ENCODE measurements at regions of chr14 and their contacts with region 1.

Region 1: DNA sequence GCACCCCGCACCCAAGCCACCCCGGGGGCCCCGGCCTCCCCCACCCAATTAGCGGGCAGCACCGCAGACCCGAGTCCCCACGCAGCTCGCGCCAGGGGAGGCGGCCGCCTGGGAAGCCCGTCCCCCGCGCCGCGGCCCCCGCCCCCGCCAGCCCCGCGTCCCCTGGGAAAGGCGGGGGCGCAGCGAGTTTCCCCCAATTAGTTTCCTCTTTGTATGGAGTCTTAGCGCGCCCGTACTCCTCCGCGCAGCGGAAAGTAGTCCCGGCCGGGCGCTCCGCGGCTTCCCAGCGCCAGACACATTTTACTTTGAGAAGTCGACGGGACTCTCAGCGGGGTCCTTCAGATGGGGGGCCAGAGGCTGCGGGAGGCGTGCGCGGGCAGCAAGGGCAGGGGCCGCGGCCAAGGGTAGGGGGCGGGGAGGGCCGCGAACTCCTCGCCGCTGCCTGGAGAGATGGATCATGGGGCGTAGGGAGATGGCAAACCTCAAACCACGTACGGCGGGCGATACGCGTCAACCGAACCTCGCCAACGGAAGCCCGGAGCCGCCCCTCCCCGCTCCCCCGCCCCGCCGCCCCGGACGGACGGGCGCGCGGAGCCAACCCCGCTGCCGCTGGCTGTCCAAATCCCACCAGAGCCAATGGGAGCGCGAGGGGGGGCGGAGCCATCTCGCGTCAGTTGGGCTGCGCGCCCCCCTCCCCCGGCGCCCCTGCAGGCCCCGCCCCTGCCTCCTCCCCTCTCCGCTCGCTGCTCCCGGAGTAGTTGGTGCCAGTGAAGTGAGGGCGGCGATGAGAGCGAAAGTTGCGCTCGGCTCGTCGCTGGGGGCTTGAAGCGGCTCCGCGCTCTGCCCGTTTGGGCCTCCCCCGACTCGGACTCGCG is at the start of gene RCOR1:
- DNase-seq: peak; percentile 98
- H3K4me3 Mint-ChIP-seq: peak within 1 kb of the TSS; percentile 85
- H3K27ac Mint-ChIP-seq: peak within 1 kb of the TSS; percentile 91
- H3K4me1 Mint-ChIP-seq: peaks cover 31% of the 10 kb centered on the region
- H3K27me3 Mint-ChIP-seq: no peaks in the 10 kb centered on the region
- total RNA-seq, gene RCOR1: 11.9 to 12.2 TPM

Region 2: DNA sequence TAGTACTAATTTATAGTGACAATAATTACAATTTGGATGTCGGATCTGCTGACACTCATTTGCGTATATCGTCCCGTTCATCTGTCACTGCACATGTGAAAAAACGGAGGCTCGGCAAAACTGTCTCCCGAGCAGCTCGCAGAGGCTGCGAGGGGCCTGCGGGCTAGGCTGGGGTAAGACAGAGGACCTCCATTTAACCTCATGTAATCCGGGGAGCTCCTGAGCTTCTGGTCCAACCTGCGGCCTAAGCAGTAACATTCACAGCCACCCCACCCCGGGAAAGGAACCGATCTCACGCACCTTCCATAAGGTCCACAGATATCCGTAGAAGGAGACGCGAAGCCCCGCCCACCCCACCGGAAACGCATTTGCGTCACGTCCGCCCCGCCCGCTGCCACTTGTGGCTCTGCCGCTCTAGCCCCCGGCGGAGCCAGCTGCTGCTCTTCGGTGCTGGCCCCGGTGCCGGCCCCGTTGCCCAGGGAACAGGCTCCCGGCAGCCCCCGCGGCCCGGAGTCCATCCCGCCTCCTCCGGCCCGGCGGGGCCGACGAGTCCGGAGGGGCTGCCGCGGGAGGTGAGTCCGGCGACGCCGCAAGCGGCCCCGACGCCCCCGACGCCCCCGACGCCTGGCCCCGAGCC is 229.5 kb before region 1 on chr14 and contains the starts of genes CINP and TECPR2:
- CTCF ChIA-PET with region 1: no interaction called
- intact Hi-C with region 1: loop called (anchors 1 kb)
- DNase-seq: peak; percentile 99
- H3K4me3 Mint-ChIP-seq: no peak within 1 kb of the TSS
- H3K27ac Mint-ChIP-seq: peak within 1 kb of the TSS; percentile 94
- H3K4me1 Mint-ChIP-seq: peaks cover 30% of the 10 kb centered on the region
- H3K27me3 Mint-ChIP-seq: no peaks in the 10 kb centered on the region
- total RNA-seq, gene CINP: 45.3 to 46.2 TPM
- total RNA-seq, gene TECPR2: 2.3 to 3.6 TPM

Region 3: GRCh38 chr14:102451061-102451350 is 141.1 kb before region 1 on chr14:
- CTCF ChIA-PET with region 1: no interaction called
- intact Hi-C with region 1: no loop called
- DNase-seq: no peak
- H3K4me3 Mint-ChIP-seq: no peak overlapping the region
- H3K27ac Mint-ChIP-seq: no peak overlapping the region
- H3K4me1 Mint-ChIP-seq: no peaks in the 10 kb centered on the region
- H3K27me3 Mint-ChIP-seq: no peaks in the 10 kb centered on the region

Region 4: DNA sequence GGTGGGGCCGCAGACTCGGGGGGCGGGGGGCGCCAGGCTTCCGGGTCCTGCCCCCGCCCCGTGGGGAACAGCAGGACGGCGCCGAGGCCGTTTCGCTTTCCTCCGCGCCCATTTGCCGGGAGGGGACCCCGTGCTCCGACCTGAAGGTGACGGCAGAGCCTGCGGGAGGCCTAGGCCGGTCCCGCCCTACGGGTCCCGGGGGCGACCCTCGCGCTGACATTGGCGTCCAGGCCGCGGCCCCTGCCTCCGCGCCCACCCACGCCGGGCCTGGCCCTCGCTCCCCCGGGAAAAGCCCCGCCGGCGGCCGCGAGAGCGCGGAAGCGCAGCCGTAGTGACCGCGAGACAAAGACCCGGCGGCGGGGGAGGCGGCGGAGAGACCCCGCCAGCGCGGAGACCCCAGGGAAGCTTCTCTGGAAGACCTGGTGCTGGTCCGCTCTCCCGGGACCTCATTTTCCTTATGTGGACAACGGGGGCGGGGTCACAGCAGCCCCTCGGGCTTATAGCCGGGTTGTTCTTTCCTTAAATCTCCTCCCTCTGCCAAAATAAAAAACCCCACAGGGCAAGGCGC is 36.8 kb before region 1 on chr14:
- CTCF ChIA-PET with region 1: no interaction called
- intact Hi-C with region 1: loop called (anchors 5 kb)
- DNase-seq: peak; percentile 56
- H3K4me3 Mint-ChIP-seq: peak overlapping the region; percentile 52
- H3K27ac Mint-ChIP-seq: no peak overlapping the region
- H3K4me1 Mint-ChIP-seq: no peaks in the 10 kb centered on the region
- H3K27me3 Mint-ChIP-seq: no peaks in the 10 kb centered on the region

Region 5: DNA sequence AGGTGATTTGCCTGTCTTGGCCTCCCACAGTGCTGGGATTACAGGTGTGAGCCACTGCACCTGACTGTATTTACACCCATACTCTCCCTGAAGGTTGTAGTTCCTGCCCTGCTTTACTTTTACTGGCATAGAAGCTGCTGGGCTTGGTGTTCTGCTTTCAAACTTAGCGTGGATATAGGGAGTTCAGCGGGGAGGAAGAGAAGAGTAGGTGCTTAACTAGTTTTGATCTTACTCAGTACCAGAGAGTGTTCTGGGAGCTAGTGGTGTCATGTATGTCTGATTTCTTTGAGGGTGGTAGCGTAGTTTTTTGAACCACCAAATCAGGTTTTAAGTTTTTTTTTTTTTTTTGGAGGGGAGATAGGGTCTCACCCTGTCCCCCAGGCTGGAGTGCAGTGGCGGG is 14.2 kb after region 1 on chr14:
- CTCF ChIA-PET with region 1: interaction called, 12 read pairs
- intact Hi-C with region 1: loop called (anchors 1 kb)
- DNase-seq: peak; percentile 25
- H3K4me3 Mint-ChIP-seq: no peak overlapping the region
- H3K27ac Mint-ChIP-seq: no peak overlapping the region
- H3K4me1 Mint-ChIP-seq: peaks cover 46% of the 10 kb centered on the region
- H3K27me3 Mint-ChIP-seq: no peaks in the 10 kb centered on the region

Region 6: DNA sequence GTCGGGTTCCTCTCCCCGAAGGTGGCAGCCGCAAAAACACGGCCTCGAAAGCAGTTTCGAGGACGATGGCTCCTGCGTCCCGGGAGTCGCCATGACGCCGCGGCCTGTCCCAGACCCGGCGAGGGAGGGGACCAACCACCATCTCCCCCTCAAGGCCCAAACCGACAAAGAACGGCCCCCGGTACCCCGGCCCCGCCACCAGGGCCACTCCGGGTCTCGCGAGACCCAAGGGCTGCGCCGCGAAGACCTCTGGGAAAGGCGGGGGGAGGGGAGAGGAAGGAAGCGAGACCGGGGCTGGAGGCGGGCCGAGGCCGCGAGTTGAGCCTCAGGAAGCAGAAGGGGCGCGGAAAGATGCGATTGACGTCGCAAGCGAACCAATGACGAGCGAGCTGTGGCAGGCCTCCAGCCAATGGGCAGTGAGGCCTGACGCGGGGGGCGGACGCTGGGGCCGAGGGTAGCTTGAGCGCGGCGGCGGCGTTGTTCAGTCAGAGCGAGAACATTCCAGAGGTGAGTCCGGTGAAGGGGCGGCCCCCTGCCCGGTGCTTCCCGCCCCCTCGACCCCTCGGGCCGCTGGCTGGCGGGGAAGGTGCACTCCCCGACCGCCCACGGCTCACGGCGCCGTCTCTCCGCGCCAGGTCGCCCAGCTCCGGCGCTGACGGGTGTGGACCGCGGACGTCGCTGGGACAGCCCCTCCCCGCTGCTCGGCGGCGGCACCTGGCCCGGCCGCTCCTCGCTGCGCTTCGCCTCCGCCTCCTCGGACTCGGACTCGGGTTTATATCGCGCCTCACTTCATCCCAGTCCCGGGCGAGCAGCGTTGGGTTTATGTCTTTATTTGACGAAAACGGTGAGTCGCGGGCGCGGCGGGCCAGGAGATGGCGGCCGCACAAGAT is 741.9 kb after region 1 on chr14 and contains the start of gene EIF5:
- CTCF ChIA-PET with region 1: no interaction called
- intact Hi-C with region 1: loop called (anchors 2 kb)
- DNase-seq: peak; percentile 99
- H3K4me3 Mint-ChIP-seq: peak within 1 kb of the TSS; percentile 85
- H3K27ac Mint-ChIP-seq: peak within 1 kb of the TSS; percentile 95
- H3K4me1 Mint-ChIP-seq: peaks cover 51% of the 10 kb centered on the region
- H3K27me3 Mint-ChIP-seq: no peaks in the 10 kb centered on the region
- total RNA-seq, gene EIF5: 117 to 121 TPM

Measured in activated naive CD4-positive, alpha-beta T cell treated with anti-CD3 and anti-CD28 coated beads for 36 hours (primary cell).